Right ventricle myocardium inferior (tissue), 1 donor: ENCODE measurements at regions of chr10 and their contacts with region 1.

Region 1: DNA sequence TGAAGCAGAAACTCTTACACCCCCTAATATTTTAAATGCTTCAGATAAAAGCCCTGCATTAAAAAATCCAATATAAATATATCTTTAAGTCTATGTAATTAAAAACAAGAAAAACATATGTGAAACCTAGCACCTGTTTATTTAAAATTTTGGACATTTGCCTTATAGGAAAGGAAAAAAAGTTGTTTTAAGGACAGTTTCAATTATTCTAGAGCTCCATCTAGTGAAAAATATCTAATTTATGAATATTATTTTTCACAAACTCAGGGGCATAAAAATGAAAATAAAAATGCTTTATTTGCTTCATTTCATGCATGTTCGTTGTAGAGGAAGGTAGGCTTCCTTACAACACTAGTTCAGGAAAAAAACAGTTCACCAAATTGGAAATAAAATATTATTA is 26.1 kb downstream of the ENKUR start:
- DNase-seq: no peak
- ATAC-seq: no peak

Region 2: GRCh38 chr10:24428410-24428782 is 561.5 kb before region 1 on chr10:
- intact Hi-C with region 1: no loop called
- DNase-seq: no peak
- ATAC-seq: no peak

Region 3: DNA sequence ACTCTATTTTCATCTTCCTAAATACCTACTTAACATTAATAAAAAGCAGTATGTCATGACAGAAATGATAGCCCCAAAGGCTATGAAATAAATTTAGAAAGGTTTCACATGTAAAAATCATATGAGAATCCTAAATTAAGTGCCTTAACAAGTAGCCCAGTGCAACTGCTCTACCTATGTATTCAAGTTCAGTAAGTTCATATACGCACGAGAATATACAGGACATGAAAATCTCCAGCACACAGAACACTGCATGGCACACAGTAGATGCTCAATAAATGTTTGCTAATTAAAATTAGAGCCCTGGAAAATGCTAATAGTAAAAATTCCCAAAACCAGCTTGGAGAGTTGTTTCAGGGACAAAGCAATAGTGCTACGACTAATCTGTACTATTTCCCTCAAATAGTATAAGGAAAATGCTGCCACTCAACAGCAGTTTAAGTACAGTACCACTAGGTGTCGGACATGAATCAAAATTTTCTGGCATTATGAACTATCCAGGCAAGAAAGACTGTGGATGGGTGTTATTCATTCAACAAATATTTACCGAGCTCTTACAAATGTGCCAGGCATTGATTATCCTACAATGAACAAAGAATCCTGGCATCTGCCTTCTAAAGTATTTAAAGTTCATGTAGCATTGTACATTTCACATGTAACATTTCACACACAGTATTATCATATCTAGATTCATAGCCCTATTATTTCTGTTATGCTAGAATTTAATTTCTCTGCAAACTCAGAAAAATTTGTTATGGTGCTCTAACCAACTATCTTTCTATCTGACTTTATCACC is 347.0 kb before region 1 on chr10:
- intact Hi-C with region 1: loop called (anchors 1 kb)
- DNase-seq: no peak
- ATAC-seq: peak; percentile 89